ENCODE measurements at regions of chr2 and their contacts with region 1.

Region 1: DNA sequence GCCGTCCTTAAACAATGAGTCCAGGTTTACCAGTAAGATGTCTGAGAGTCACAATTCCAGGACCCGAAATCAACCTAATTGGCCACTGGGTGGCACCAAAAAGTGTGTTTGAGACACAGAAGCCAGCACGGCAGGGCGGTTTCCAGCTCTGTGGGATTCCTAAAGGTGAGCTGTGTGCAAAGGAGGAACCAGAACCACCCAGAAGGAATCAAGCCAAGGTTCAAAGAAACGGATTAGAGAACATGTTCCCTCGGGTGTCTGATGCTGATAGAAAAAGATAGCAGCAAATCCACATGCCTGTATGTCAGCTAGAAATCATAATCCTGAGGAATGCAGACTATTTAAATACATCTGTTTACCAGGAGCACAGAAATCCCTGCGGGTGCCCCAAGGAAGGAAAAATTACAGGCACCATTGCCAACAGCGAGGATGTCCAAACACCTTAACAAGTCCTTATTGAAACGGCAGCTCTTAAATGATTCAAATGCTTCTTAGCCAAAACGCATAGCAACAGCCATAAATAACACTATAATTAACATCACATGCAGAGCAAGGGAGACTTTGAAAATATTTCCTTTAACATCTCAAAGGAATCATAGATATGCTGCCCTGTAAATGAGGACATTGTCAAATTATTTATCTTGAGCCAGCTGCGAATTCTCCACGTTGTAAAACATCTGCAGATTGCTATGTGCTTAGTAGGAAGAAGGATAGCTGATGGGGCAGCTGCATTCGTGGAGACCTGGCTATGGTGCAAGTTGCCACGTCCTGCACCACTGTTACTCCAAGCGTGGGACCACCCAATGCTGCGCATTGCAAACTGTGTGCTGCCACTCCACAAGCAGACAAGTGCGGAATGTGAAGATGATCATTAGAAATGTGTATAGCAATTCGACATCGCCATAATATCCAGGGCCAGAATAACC is 318.7 kb upstream of the NCKAP5 start:
- DNase-seq: peak; percentile 20
- ATAC-seq: peak; percentile 93
- H3K4me3 ChIP-seq: no peak overlapping the region
- H3K27ac ChIP-seq: no peak overlapping the region
- H3K4me1 ChIP-seq: no peaks in the 10 kb centered on the region
- H3K27me3 ChIP-seq: no peaks in the 10 kb centered on the region; the same call in 1 of the 2 replicates
- CTCF ChIP-seq: peak; percentile 79

Region 2: GRCh38 chr2:134207564-134208209 is 320.7 kb after region 1 on chr2:
- CTCF ChIA-PET with region 1: no interaction called
- POLR2A ChIA-PET with region 1: no interaction called
- in situ Hi-C with region 1: no loop called
- intact Hi-C with region 1: loop called (anchors 5 kb)
- DNase-seq: peak; percentile 33
- ATAC-seq: peak; percentile 85
- H3K4me3 ChIP-seq: no peak overlapping the region
- H3K27ac ChIP-seq: no peak overlapping the region
- H3K4me1 ChIP-seq: no peaks in the 10 kb centered on the region
- H3K27me3 ChIP-seq: no peaks in the 10 kb centered on the region
- CTCF ChIP-seq: peak; percentile 84

Region 3: GRCh38 chr2:134411828-134412638 is 525.0 kb after region 1 on chr2:
- CTCF ChIA-PET with region 1: interaction called, 4 read pairs
- POLR2A ChIA-PET with region 1: no interaction called
- in situ Hi-C with region 1: no loop called
- intact Hi-C with region 1: loop called (anchors 10 kb)
- DNase-seq: peak; percentile 41
- ATAC-seq: peak; percentile 90
- H3K4me3 ChIP-seq: no peak overlapping the region
- H3K27ac ChIP-seq: no peak overlapping the region
- H3K4me1 ChIP-seq: no peaks in the 10 kb centered on the region
- H3K27me3 ChIP-seq: no peaks in the 10 kb centered on the region
- CTCF ChIP-seq: peak; percentile 74

Measured in Panc1 (cell line).